ENCODE measurements at regions of chr5 and their contacts with region 1.

Region 1: GRCh38 chr5:178279725-178280438 is 47.3 kb upstream of the PHYKPL start:
- DNase-seq: peak; percentile 80 to 98 (median 95)

Region 2: GRCh38 chr5:178163772-178164735 is 115.8 kb before region 1 on chr5:
- intact Hi-C with region 1: no loop called
- DNase-seq: peak; percentile 71 to 97 (median 90)

Region 3: GRCh38 chr5:178453224-178453623 is 173.3 kb after region 1 on chr5:
- intact Hi-C with region 1: loop called (anchors 10 kb)
- DNase-seq: no peak

Region 4: DNA sequence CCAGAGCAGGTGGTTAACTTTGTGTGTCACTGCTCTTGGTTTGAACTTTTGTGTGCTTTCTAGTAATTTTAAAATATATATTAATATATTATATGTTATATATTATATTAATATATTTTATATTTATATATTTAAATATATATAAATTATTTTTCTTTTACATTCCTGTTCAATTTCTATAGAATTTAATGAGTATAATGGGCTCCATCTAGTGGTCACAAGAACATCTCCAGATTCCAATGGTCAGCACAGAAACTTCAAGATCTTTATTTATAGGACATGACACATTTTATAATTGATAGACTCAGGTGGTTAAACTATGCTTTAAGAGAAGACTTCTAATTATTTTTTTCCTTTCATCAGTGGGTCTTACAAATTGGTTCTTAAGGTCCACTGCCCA is 271.2 kb after region 1 on chr5:
- intact Hi-C with region 1: loop called (anchors 1 kb)
- DNase-seq: no peak

Region 5: GRCh38 chr5:178590141-178590923 is 310.4 kb after region 1 on chr5 and contains the start of gene COL23A1:
- intact Hi-C with region 1: loop called (anchors 2 kb)
- DNase-seq: peak in 9 of 10 donors; percentile 30 to 90 (median 56)

Region 6: GRCh38 chr5:179198825-179199224 is 918.9 kb after region 1 on chr5:
- intact Hi-C with region 1: no loop called
- DNase-seq: peak in 2 of 10 donors; percentile 44 to 63

Measured in posterior cingulate gyrus (tissue), 11 donors.